Uterus (tissue), 4 donors: ENCODE measurements at regions of chr11 and their contacts with region 1.

Region 1: GRCh38 chr11:59142530-59143507 is at the start of gene FAM111A:
- DNase-seq: peak; percentile 85 to 87
- H3K4me3 ChIP-seq: peak within 1 kb of the TSS; percentile 84 to 95
- H3K27ac ChIP-seq: peak within 1 kb of the TSS; percentile 94 to 97
- H3K4me1 ChIP-seq: no peaks in the 10 kb centered on the region
- H3K27me3 ChIP-seq: no peaks in the 10 kb centered on the region
- CTCF ChIP-seq: peak in 1 of 4 experiments; percentile 28
- POLR2A ChIP-seq: no peak
- total RNA-seq, gene FAM111A: 7.2 to 65.2 (median 28.3) TPM

Region 2: GRCh38 chr11:58579192-58580129 is 563.4 kb before region 1 on chr11:
- intact Hi-C with region 1: loop called (anchors 10 kb)
- DNase-seq: peak; percentile 90 to 92
- H3K4me3 ChIP-seq: peak overlapping the region; percentile 96 to 99
- H3K27ac ChIP-seq: peak overlapping the region; percentile 99 to 100
- H3K4me1 ChIP-seq: peaks cover 3 to 14% of the 10 kb centered on the region in 2 donors
- H3K27me3 ChIP-seq: no peaks in the 10 kb centered on the region
- CTCF ChIP-seq: peak; percentile 75 to 91 (median 82)
- POLR2A ChIP-seq: peak; percentile 55 to 61